PC-9 (cell line): ENCODE measurements at regions of chr11 and their contacts with region 1.

Region 1: DNA sequence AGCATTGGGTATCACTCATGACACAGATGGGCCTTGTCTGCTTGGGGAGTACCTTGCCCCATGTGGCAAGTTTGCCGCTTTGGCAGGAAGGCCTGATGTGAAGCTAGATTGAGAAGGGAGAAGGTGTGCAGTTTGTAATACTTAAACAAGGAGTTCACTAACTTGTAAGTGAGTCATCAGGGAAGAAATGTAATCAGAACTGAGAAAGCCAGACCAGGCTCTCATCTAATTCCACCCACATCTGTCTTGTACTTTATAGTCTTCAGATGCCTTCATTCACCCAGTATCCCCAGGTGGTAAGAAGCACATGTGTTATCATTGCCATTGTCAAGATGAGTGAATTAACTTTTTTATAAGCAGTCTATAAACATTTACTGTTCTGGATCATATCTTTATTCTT is 116.0 kb upstream of the DDI1 start:
- DNase-seq: no peak
- H3K4me3 ChIP-seq: no peak overlapping the region
- H3K27ac ChIP-seq: no peak overlapping the region
- H3K4me1 ChIP-seq: peaks cover 35% of the 10 kb centered on the region
- H3K27me3 ChIP-seq: no peaks in the 10 kb centered on the region
- CTCF ChIP-seq: no peak

Region 2: DNA sequence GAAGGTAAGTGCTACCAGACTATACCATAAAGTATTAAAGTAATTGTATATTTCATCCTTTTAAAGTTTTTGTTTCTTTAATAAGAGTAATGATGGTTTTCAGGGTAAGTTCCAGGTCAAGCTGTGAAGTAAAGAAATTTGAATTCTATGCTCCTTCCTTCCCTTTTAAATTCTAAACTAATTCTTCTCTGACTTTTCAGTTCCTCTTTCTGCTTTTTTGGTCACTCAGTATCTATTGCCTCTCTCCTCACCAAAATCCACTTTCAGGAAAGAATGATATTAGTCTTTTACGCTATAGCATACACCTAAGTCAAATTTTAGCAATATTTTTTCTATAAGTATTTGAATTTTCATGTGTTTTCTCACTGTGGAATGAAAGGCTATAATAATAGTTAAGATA is 1203.9 kb before region 1 on chr11:
- CTCF ChIA-PET with region 1: no interaction called
- POLR2A ChIA-PET with region 1: no interaction called
- intact Hi-C with region 1: no loop called
- DNase-seq: no peak
- H3K4me3 ChIP-seq: no peak overlapping the region
- H3K27ac ChIP-seq: no peak overlapping the region
- H3K4me1 ChIP-seq: no peaks in the 10 kb centered on the region
- H3K27me3 ChIP-seq: no peaks in the 10 kb centered on the region
- CTCF ChIP-seq: no peak

Region 3: DNA sequence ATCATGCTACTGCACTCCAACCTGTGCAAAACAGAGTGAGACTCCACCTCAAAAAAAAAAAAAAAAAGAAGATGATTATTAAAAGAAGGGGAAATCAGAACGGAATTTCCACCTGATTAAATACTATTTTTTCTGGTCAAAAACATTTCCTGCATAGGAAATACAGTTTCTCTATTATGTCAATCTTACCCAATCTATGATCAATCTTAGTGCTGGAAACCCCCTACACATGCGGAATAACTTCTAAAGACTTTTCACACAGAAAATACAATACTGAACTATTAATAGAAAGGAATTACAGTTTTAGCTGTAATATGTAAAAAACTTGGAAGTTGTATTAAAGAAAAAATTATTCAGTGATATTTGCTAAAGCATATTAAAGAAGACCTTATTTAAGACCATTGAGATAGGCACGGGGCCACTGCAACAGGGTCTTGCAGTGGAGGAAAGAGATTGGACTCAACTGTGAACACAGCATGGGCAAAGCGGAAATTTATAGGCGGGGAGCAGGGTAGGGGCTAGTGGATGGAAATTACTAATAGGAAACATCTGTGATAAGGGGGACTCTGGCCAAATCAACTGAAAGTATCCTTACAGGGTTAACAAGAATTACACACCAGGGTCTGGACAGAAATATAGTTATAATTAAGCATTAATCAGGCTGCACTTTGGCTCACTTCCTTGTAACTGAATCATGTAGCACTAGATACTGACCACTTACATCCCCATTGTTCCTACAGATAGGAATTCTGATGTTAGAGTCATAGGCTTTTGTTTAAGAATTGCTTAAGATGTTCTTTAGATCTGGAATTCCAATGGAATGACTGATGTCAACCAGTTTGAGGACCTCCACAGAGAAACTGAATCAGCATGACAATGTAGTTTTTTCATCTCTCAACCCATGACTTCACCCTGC is 295.5 kb before region 1 on chr11:
- CTCF ChIA-PET with region 1: no interaction called
- POLR2A ChIA-PET with region 1: no interaction called
- intact Hi-C with region 1: loop called (anchors 1 kb)
- DNase-seq: peak; percentile 25 to 99
- H3K4me3 ChIP-seq: 0 out of 2 replicates have a peak overlapping the region, but pooled peaks have one; percentile 2
- H3K27ac ChIP-seq: peak overlapping the region; percentile 98
- H3K4me1 ChIP-seq: peaks cover 44% of the 10 kb centered on the region
- H3K27me3 ChIP-seq: no peaks in the 10 kb centered on the region
- CTCF ChIP-seq: no peak

Region 4: GRCh38 chr11:103682318-103683184 is 237.9 kb before region 1 on chr11:
- CTCF ChIA-PET with region 1: no interaction called
- POLR2A ChIA-PET with region 1: interaction called, 3 read pairs
- intact Hi-C with region 1: loop called (anchors 2 kb)
- DNase-seq: peak; percentile 49 to 51
- H3K4me3 ChIP-seq: no peak overlapping the region
- H3K27ac ChIP-seq: no peak overlapping the region
- H3K4me1 ChIP-seq: no peaks in the 10 kb centered on the region
- H3K27me3 ChIP-seq: no peaks in the 10 kb centered on the region
- CTCF ChIP-seq: peak; percentile 92

Region 5: GRCh38 chr11:103737747-103738146 is 182.7 kb before region 1 on chr11:
- CTCF ChIA-PET with region 1: no interaction called
- POLR2A ChIA-PET with region 1: no interaction called
- intact Hi-C with region 1: loop called (anchors 2 kb)
- DNase-seq: no peak
- H3K4me3 ChIP-seq: no peak overlapping the region
- H3K27ac ChIP-seq: no peak overlapping the region
- H3K4me1 ChIP-seq: no peaks in the 10 kb centered on the region
- H3K27me3 ChIP-seq: no peaks in the 10 kb centered on the region
- CTCF ChIP-seq: no peak

Region 6: DNA sequence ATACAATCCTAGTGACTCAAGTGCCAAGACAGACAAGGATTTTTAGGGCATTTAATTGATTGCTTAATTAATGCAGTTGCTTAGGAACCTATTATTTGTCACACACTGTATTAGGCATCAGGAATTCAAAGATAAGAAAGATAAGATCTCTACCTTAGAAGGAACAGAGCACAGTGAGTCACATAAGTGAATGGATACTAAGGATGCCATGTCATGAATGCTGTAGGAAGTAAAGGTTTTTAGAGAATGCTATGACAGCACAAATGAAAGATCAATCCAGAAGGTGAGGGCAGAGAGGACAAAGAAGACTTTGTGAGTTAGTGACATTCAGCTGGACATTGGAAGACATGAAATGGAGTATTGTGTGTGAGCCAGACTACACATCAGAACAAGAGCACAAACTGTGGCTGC is 31.9 kb before region 1 on chr11:
- CTCF ChIA-PET with region 1: no interaction called
- POLR2A ChIA-PET with region 1: no interaction called
- intact Hi-C with region 1: loop called (anchors 1 kb)
- DNase-seq: peak in 1 of 2 experiments; percentile 97
- H3K4me3 ChIP-seq: no peak overlapping the region
- H3K27ac ChIP-seq: peak overlapping the region; percentile 54
- H3K4me1 ChIP-seq: peaks cover 16% of the 10 kb centered on the region
- H3K27me3 ChIP-seq: no peaks in the 10 kb centered on the region
- CTCF ChIP-seq: no peak

Region 7: GRCh38 chr11:104164028-104164520 is 243.6 kb after region 1 on chr11 and contains the start of gene PDGFD:
- CTCF ChIA-PET with region 1: no interaction called
- POLR2A ChIA-PET with region 1: no interaction called
- intact Hi-C with region 1: loop called (anchors 5 kb)
- DNase-seq: peak; percentile 70 to 76
- H3K4me3 ChIP-seq: peak within 1 kb of the TSS; percentile 69
- H3K27ac ChIP-seq: peak within 1 kb of the TSS; percentile 28
- H3K4me1 ChIP-seq: peaks cover 15% of the 10 kb centered on the region
- H3K27me3 ChIP-seq: no peaks in the 10 kb centered on the region
- CTCF ChIP-seq: peak; percentile 61
- total RNA-seq, gene PDGFD: 6.1 and 6.9 TPM in 2 replicates

Region 8: DNA sequence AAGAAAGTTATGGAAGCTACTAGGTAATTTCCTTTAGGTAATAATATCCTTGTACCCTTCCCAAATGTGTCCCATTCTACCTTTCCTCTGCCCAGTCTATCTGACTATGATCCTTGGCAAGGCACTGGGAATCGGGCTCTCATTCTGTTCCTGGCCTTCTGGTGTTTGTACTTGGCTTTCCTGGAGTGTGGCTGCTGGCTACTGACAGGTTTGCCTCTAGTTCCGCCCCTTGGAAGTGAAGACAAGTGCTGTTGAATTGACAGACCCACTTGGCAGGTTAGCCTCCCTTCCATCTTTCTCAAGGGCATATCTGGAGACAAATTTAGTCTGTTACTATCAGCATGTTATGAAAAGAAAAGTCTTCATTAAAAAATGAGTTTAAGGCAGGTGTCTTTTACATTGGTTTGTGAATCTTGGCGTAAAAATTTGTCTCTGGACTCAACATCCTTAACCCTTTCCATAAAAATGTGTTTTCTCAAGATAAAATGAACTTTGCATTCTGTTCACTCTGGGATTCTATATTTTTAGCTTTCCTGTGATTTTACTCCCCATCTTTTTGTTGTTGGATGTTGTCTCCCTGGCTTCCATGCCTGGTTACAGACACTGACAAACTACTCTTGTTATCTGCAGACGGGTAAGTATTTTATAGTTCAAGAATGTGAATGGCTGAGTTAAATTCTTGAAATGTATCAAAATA is 530.9 kb after region 1 on chr11:
- CTCF ChIA-PET with region 1: no interaction called
- POLR2A ChIA-PET with region 1: no interaction called
- intact Hi-C with region 1: loop called (anchors 5 kb)
- DNase-seq: no peak
- H3K4me3 ChIP-seq: peak overlapping the region; percentile 30; the same call in 1 of the 2 replicates
- H3K27ac ChIP-seq: peak overlapping the region; percentile 91
- H3K4me1 ChIP-seq: peaks cover 46% of the 10 kb centered on the region
- H3K27me3 ChIP-seq: no peaks in the 10 kb centered on the region
- CTCF ChIP-seq: no peak